ENCODE measurements at regions of chr19 and their contacts with region 1.

Region 1: GRCh38 chr19:48333467-48334384 is 8.4 kb downstream of the EMP3 start:
- DNase-seq: peak; percentile 97
- H3K4me3 Mint-ChIP-seq: peak overlapping the region; percentile 87
- H3K27ac Mint-ChIP-seq: peak overlapping the region; percentile 92
- H3K4me1 Mint-ChIP-seq: peaks cover 50% of the 10 kb centered on the region
- H3K27me3 Mint-ChIP-seq: no peaks in the 10 kb centered on the region
- CTCF ChIP-seq: peak; percentile 94

Region 2: GRCh38 chr19:48271531-48272151 is 62.1 kb before region 1 on chr19:
- CTCF ChIA-PET with region 1: interaction called, 18 read pairs
- intact Hi-C with region 1: no loop called
- DNase-seq: peak; percentile 24
- H3K4me3 Mint-ChIP-seq: peak overlapping the region; percentile 79
- H3K27ac Mint-ChIP-seq: peak overlapping the region; percentile 82
- H3K4me1 Mint-ChIP-seq: peaks cover 27% of the 10 kb centered on the region
- H3K27me3 Mint-ChIP-seq: peaks cover 23% of the 10 kb centered on the region
- CTCF ChIP-seq: no peak

Region 3: DNA sequence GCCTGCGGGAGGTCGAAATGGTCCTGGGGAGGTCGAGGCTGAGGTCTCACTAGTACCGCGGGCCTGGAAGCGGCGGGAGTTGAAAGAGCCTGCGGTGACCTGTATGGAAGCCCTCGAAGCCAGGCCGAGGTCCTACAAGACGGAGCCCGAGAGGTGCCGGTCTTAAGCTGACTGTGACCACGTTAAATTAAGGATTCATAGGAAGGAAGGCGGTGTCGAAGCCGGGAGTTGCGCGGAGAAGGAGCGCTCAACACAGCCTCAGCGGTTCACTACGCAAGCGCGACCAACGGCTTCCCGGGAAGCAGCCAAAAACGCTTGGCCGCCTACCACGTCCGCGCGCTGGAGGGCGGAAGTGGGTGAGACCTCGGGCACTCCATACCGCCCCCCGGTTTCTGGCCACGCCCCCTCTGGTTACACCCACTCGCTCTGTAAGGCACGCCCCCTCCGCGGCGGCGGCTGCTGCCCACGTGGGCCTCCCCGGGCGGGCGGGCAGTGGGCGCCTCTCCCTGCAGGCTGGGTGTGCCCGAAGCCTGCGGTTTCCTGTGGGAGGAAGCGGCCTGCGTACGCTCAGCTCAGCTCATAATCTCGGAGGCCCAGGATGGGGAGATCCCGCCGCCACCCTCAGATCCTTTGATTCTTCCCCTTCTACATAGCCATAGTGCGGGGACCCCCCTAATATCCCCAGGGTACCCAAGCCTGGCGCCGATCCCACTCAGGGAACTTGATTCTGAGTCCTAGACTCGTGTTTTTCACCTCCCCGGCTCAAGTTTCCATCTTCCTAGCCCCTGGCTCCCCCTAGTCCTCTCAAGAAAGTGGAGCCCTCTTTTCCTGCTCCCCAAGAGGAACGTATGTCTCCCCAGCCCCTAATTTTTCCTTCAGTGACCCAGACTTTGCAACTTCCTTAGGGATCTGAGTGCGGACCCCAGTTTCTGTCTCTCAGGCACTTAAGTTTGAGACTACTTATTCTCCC is 11.8 kb before region 1 on chr19:
- CTCF ChIA-PET with region 1: interaction called, 159 read pairs
- intact Hi-C with region 1: loop called (anchors 1 kb)
- DNase-seq: peak; percentile 100
- H3K4me3 Mint-ChIP-seq: peak overlapping the region; percentile 79
- H3K27ac Mint-ChIP-seq: peak overlapping the region; percentile 83
- H3K4me1 Mint-ChIP-seq: peaks cover 59% of the 10 kb centered on the region
- H3K27me3 Mint-ChIP-seq: peaks cover 16% of the 10 kb centered on the region
- CTCF ChIP-seq: no peak

Region 4: DNA sequence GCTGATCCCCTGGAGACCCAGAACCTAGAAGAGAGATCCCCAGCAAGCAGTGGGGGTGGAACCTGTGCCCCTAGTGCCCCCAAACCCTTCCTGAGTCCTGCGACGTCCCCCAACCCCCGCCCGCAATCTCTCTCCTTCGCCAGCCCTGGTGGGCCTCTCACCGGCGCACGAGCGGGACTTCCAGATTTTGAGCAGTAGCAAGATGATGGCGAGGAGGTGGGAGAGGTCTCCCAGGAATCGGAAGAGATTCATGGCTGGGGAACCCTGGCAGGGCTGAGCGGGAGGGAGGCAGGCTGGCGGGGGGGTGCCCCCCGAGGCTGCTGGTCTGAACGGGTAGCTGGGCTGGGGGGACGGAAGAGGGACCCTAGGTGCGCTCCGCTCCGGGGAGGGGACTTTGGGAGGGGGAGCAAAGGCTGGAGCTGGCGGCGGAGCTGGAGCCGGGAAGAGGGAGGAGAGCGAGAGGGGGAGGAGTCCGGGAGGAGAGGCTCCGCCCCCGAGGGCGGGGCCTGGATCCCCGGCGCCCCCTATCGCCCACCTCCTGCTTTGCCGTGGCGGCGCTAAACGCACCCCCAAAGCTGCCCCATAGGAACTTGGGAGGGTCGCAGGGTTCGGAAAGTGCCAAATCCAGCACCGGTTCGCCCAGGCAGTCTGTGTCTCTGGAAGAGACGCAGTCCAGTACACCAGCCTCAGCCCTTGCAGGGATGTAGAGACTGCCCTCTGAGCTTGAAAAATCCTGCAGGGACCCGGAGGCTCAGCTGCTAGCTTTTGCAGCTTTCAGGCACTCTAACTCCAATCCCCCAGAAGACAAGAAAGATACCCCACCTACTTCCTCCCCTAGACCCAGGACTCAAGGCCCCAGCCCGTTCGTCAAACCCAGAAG is 57.6 kb after region 1 on chr19 and contains the start of gene KDELR1:
- CTCF ChIA-PET with region 1: interaction called, 12 read pairs
- intact Hi-C with region 1: no loop called
- DNase-seq: peak; percentile 87
- H3K4me3 Mint-ChIP-seq: peak within 1 kb of the TSS; percentile 82
- H3K27ac Mint-ChIP-seq: peak within 1 kb of the TSS; percentile 89
- H3K4me1 Mint-ChIP-seq: peaks cover 9% of the 10 kb centered on the region
- H3K27me3 Mint-ChIP-seq: peaks cover 51% of the 10 kb centered on the region
- CTCF ChIP-seq: peak; percentile 95
- total RNA-seq, gene KDELR1: 185 and 194 TPM in 2 replicates

Region 5: DNA sequence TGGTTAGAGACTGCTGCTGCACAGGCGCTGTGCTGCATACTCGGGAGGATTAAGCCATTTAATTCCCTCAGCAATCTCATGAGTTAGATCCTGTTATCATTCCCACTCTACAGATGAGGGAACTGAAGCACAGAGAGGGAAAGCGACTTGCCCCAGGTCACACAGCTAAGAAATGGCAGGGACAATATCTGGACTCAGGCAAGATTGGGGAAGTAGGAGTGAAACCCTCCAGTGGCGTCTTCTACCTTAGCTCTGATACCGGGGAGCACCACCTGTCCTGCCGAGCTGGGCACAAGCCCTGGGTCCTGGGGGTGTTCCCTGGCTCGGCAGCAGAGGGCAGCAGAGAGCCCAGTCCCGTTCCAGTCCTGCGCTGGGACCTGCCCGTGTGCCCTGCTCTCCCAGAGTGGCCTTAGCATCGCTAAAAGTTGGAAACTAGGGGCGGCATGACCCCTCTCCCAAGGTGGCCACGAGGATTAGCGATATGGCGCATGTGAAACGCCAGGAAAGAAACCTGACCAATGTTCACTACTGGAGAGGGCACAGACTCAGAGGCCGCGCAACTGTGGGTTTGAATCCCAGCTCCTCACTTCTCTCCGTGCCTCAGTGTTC is 156.0 kb after region 1 on chr19:
- CTCF ChIA-PET with region 1: no interaction called
- intact Hi-C with region 1: loop called (anchors 10 kb)
- DNase-seq: peak; percentile 96
- H3K4me3 Mint-ChIP-seq: no peak overlapping the region
- H3K27ac Mint-ChIP-seq: no peak overlapping the region
- H3K4me1 Mint-ChIP-seq: peaks cover 42% of the 10 kb centered on the region
- H3K27me3 Mint-ChIP-seq: peaks cover 43% of the 10 kb centered on the region
- CTCF ChIP-seq: peak; percentile 91